Caco-2 (cell line): ENCODE measurements at regions of chr11 and their contacts with region 1.

Region 1: GRCh38 chr11:91248199-91248807 is 976.3 kb upstream of the FAT3 start:
- DNase-seq: peak; percentile 50 to 59
- H3K4me3 ChIP-seq: no peak overlapping the region
- H3K4me3 Mint-ChIP-seq: no peak overlapping the region
- H3K27ac Mint-ChIP-seq: no peak overlapping the region
- H3K4me1 ChIP-seq: no peaks in the 10 kb centered on the region
- H3K4me1 Mint-ChIP-seq: peaks cover 6% of the 10 kb centered on the region
- H3K27me3 ChIP-seq: no peaks in the 10 kb centered on the region
- H3K27me3 Mint-ChIP-seq: no peaks in the 10 kb centered on the region
- CTCF ChIP-seq: peak; percentile 81 to 87

Region 2: GRCh38 chr11:90250970-90251369 is 997.3 kb before region 1 on chr11:
- CTCF ChIA-PET with region 1: no interaction called
- POLR2A ChIA-PET with region 1: no interaction called
- intact Hi-C with region 1: loop called (anchors 2 kb)
- DNase-seq: no peak
- H3K4me3 ChIP-seq: no peak overlapping the region
- H3K4me3 Mint-ChIP-seq: no peak overlapping the region
- H3K27ac Mint-ChIP-seq: no peak overlapping the region
- H3K4me1 ChIP-seq: no peaks in the 10 kb centered on the region
- H3K4me1 Mint-ChIP-seq: no peaks in the 10 kb centered on the region
- H3K27me3 ChIP-seq: no peaks in the 10 kb centered on the region
- H3K27me3 Mint-ChIP-seq: peaks cover 8% of the 10 kb centered on the region
- CTCF ChIP-seq: no peak

Region 3: DNA sequence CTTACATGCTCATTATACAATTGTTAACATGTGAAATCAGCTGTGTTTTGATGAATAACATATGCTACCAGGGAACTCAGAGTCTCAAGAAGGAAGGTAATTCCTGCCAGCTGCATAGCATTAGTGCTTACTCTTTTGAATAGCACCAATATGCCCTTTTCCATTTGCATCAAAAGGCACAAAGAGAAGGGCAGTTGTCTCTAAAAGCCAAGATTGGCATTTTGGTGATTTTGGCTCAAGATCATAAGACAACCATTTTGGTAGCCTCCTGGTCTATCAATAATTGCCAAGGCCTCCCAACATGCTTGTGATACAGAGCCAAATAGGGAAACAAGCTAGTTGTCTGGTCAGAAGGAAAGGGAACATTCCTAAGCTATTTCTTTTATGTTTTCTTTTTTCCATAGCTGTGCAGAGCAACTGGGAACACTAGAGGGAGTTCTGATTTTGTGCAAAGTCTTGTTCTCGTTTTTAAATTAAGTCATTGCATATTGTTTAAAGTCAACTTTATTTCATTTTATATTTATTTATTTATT is 608.8 kb before region 1 on chr11:
- CTCF ChIA-PET with region 1: no interaction called
- POLR2A ChIA-PET with region 1: no interaction called
- intact Hi-C with region 1: loop called (anchors 10 kb)
- DNase-seq: no peak
- H3K4me3 ChIP-seq: no peak overlapping the region
- H3K4me3 Mint-ChIP-seq: no peak overlapping the region
- H3K27ac Mint-ChIP-seq: no peak overlapping the region
- H3K4me1 ChIP-seq: no peaks in the 10 kb centered on the region
- H3K4me1 Mint-ChIP-seq: no peaks in the 10 kb centered on the region
- H3K27me3 ChIP-seq: no peaks in the 10 kb centered on the region
- H3K27me3 Mint-ChIP-seq: no peaks in the 10 kb centered on the region
- CTCF ChIP-seq: peak; percentile 29 to 75

Region 4: GRCh38 chr11:90908074-90908473 is 340.2 kb before region 1 on chr11:
- CTCF ChIA-PET with region 1: no interaction called
- POLR2A ChIA-PET with region 1: no interaction called
- intact Hi-C with region 1: loop called (anchors 1 kb)
- DNase-seq: no peak
- H3K4me3 ChIP-seq: no peak overlapping the region
- H3K4me3 Mint-ChIP-seq: no peak overlapping the region
- H3K27ac Mint-ChIP-seq: no peak overlapping the region
- H3K4me1 ChIP-seq: no peaks in the 10 kb centered on the region
- H3K4me1 Mint-ChIP-seq: no peaks in the 10 kb centered on the region
- H3K27me3 ChIP-seq: no peaks in the 10 kb centered on the region
- H3K27me3 Mint-ChIP-seq: peaks cover 10% of the 10 kb centered on the region
- CTCF ChIP-seq: no peak

Region 5: DNA sequence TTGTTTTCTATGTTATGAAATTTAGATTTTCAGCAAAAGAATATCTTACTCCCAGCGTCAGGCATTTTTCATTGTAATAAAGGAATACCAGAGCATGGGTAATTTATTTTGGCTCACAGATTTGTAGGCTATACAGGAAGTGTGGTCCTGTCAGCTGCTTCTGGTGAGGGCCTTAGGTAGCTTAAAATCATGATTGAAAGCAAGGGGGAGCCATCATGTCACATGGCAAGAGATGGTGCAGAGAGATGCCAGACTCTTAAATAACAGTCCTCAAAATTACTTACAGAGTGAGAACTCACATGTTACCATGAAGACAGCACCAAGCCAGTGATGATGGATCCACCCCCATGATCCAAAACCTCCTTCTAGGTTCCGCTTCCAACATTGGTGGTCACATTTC is 200.4 kb before region 1 on chr11:
- CTCF ChIA-PET with region 1: interaction called, 4 read pairs
- POLR2A ChIA-PET with region 1: no interaction called
- intact Hi-C with region 1: loop called (anchors 1 kb)
- DNase-seq: no peak
- H3K4me3 ChIP-seq: no peak overlapping the region
- H3K4me3 Mint-ChIP-seq: no peak overlapping the region
- H3K27ac Mint-ChIP-seq: no peak overlapping the region
- H3K4me1 ChIP-seq: no peaks in the 10 kb centered on the region
- H3K4me1 Mint-ChIP-seq: no peaks in the 10 kb centered on the region
- H3K27me3 ChIP-seq: no peaks in the 10 kb centered on the region
- H3K27me3 Mint-ChIP-seq: no peaks in the 10 kb centered on the region
- CTCF ChIP-seq: peak in 1 of 2 experiments; percentile 4

Region 6: GRCh38 chr11:91124363-91124762 is 123.9 kb before region 1 on chr11:
- CTCF ChIA-PET with region 1: no interaction called
- POLR2A ChIA-PET with region 1: no interaction called
- intact Hi-C with region 1: no loop called
- DNase-seq: no peak
- H3K4me3 ChIP-seq: no peak overlapping the region
- H3K4me3 Mint-ChIP-seq: no peak overlapping the region
- H3K27ac Mint-ChIP-seq: no peak overlapping the region
- H3K4me1 ChIP-seq: no peaks in the 10 kb centered on the region
- H3K4me1 Mint-ChIP-seq: no peaks in the 10 kb centered on the region
- H3K27me3 ChIP-seq: no peaks in the 10 kb centered on the region
- H3K27me3 Mint-ChIP-seq: no peaks in the 10 kb centered on the region
- CTCF ChIP-seq: no peak

Region 7: DNA sequence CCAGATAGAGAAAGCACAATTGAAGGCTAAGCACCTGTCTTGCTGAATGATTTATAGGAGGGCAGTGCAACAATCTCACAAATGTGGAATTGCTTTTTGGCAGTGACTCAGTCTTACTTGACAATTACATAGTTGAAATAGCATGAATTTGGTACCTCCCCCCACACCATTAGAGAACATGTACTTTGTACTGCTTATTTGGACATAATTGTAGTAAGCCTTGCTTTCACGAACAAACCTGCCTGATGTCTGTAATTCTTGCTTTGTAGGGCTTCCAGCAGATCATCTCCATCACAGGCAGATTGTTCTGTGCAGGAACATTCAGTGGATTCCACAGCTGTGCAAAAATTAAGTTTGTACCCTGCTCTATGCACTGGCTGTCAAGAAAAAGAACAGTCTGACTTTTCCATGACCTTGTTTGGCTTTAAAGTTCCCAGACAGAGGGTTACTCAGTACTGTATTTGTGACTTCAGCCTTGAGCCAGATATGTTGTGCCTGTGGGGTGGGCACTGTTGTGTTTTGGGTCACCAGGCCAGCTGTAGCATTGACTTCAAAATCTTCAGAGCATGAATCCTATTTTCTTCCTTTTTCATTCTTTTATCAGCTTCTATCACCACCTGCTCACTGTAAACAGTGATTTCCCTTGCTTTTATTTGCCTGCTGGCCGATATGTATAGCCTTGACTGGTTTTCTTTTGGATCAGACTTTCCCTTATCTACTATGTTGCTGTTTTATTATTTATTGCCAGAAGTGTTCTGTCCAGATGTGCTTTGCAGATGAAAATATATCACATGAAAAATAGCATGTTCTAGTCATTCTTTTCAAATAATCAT is 84.5 kb before region 1 on chr11:
- CTCF ChIA-PET with region 1: no interaction called
- POLR2A ChIA-PET with region 1: no interaction called
- intact Hi-C with region 1: loop called (anchors 2 kb)
- DNase-seq: peak; percentile 52 to 81
- H3K4me3 ChIP-seq: no peak overlapping the region
- H3K4me3 Mint-ChIP-seq: peak overlapping the region; percentile 49
- H3K27ac Mint-ChIP-seq: peak overlapping the region; percentile 58
- H3K4me1 ChIP-seq: peaks cover 30% of the 10 kb centered on the region
- H3K4me1 Mint-ChIP-seq: peaks cover 35% of the 10 kb centered on the region
- H3K27me3 ChIP-seq: no peaks in the 10 kb centered on the region
- H3K27me3 Mint-ChIP-seq: no peaks in the 10 kb centered on the region
- CTCF ChIP-seq: no peak